Mammary epithelial cell (primary cell): ENCODE measurements at regions of chr11 and their contacts with region 1.

Region 1: GRCh38 chr11:7513234-7514098 is at the start of gene PPFIBP2:
- DNase-seq: peak; percentile 64
- H3K4me3 ChIP-seq: peak within 1 kb of the TSS; percentile 67 to 85 (median 80)
- H3K27ac ChIP-seq: peak within 1 kb of the TSS; percentile 47
- H3K4me1 ChIP-seq: peaks cover 18% of the 10 kb centered on the region
- H3K27me3 ChIP-seq: no peaks in the 10 kb centered on the region
- CTCF ChIP-seq: peak; percentile 74 to 87
- total RNA-seq, gene PPFIBP2: 8.3 to 8.4 TPM

Region 2: GRCh38 chr11:7480113-7480512 is 33.4 kb before region 1 on chr11:
- CTCF ChIA-PET with region 1: no interaction called
- dilution Hi-C with region 1: loop called (anchors 5 kb)
- in situ Hi-C with region 1: no loop called
- intact Hi-C with region 1: no loop called
- DNase-seq: no peak
- H3K4me3 ChIP-seq: no peak overlapping the region
- H3K27ac ChIP-seq: no peak overlapping the region
- H3K4me1 ChIP-seq: no peaks in the 10 kb centered on the region
- H3K27me3 ChIP-seq: no peaks in the 10 kb centered on the region
- CTCF ChIP-seq: no peak

Region 3: DNA sequence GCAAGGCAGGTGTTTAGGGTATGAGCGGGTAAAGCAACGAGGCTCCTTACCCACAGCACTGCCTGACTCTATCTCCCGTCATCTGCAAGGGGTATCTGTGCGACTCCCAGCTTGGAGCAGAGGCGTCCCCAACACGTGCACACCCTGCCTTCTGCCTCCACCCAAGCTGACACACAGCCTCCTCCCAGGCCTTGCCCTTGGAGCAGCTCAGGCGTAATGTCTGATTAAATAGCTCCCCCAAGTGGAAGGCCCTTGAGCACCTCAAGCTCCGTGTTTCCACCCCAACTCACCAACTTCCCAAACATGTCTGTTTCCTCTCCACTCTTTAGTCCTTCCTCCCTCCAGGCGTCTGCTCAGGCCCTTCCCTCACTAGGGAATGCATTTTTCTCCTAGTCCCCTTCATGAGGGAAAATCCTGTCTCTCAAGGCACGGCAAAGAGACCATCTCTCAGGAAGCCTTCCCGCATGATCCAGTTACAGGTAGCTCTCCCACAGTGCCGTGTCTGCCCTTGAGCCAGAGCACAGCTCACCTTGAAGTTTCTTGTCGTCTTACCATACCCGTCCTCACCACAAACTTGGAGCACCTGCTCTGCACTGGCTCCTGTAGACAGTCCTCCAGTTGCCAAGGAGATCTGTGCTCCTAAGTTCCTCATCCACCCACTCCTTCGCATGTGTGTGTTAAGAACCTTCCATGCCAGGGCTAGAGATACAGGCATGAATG is 144.0 kb after region 1 on chr11:
- CTCF ChIA-PET with region 1: interaction called, 3 read pairs
- dilution Hi-C with region 1: no loop called
- in situ Hi-C with region 1: no loop called
- intact Hi-C with region 1: loop called (anchors 1 kb)
- DNase-seq: peak; percentile 61
- H3K4me3 ChIP-seq: no peak overlapping the region
- H3K27ac ChIP-seq: no peak overlapping the region
- H3K4me1 ChIP-seq: no peaks in the 10 kb centered on the region
- H3K27me3 ChIP-seq: no peaks in the 10 kb centered on the region
- CTCF ChIP-seq: peak; percentile 60 to 78

Region 4: DNA sequence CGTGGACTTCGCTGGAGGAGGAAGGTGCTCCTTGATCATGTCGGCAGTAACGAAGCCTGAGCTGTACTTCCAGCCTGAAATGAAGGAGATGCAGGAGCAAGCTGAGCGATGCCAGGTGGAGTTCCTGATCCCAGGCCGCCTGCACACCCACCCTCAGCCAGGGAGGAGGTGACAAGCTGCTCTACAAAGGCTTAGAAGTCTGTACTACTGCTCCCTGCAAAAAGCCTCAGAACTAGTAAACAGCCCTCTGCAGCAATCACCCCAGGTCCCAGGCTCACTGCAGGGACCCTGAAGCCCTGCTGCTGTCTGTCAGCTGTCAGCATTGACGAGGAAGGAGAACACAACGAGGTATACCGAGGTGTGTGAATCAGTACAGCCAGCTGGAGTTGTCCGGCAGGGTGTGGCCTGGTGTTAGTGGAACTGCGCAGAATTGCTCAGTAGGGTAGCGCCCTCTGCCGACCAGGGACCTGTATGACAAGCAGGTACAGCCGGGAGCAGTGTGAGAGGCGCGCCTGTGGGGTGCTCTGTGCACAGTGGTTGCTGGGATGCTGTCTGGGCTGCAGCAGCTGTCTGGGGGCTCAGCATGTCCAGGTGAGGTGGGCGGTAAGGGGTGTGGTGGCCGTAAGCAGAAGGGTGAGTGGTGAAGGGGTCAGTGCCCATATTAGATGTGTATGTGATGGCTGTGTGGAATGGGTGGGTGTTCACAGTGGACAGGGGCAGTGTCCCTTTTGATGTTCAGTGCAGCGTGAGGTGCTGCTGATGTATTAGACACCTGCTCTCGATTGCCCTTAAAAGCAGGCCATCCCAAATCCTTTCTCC is 152.2 kb after region 1 on chr11:
- CTCF ChIA-PET with region 1: no interaction called
- dilution Hi-C with region 1: no loop called
- in situ Hi-C with region 1: no loop called
- intact Hi-C with region 1: loop called (anchors 2 kb)
- DNase-seq: peak; percentile 75
- H3K4me3 ChIP-seq: no peak overlapping the region
- H3K27ac ChIP-seq: no peak overlapping the region
- H3K4me1 ChIP-seq: peaks cover 23% of the 10 kb centered on the region
- H3K27me3 ChIP-seq: no peaks in the 10 kb centered on the region
- CTCF ChIP-seq: peak; percentile 89 to 96

Region 5: DNA sequence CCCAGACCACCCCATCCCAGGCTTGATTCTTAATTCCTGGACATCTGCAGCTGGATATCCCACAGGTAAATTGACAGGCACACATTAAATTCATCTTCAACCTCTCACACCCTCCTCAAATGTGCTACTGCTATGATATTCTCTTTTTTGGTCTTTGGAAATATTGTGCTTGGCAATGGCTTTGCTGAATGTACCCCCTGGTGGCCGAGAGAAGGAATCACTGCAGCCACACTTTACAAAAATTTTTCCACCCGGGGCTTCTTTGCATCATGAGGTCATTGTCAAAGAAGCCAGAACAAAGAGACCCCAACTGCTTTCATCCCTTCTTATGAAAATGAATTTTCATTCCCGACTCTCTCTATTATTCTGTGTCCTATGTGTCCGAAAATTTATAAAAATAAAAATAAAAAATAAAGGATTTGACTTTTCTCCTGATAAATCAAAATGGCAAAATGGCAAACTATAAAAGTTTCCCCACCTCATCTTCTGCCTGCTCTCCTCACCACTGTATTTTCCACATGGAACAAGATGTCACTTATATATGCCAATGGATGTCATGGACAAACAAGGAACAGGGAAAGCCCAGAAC is 174.9 kb after region 1 on chr11:
- CTCF ChIA-PET with region 1: no interaction called
- dilution Hi-C with region 1: no loop called
- in situ Hi-C with region 1: no loop called
- intact Hi-C with region 1: loop called (anchors 1 kb)
- DNase-seq: peak; percentile 20
- H3K4me3 ChIP-seq: no peak overlapping the region
- H3K27ac ChIP-seq: no peak overlapping the region
- H3K4me1 ChIP-seq: peaks cover 9% of the 10 kb centered on the region
- H3K27me3 ChIP-seq: no peaks in the 10 kb centered on the region
- CTCF ChIP-seq: peak; percentile 78 to 83

Region 6: DNA sequence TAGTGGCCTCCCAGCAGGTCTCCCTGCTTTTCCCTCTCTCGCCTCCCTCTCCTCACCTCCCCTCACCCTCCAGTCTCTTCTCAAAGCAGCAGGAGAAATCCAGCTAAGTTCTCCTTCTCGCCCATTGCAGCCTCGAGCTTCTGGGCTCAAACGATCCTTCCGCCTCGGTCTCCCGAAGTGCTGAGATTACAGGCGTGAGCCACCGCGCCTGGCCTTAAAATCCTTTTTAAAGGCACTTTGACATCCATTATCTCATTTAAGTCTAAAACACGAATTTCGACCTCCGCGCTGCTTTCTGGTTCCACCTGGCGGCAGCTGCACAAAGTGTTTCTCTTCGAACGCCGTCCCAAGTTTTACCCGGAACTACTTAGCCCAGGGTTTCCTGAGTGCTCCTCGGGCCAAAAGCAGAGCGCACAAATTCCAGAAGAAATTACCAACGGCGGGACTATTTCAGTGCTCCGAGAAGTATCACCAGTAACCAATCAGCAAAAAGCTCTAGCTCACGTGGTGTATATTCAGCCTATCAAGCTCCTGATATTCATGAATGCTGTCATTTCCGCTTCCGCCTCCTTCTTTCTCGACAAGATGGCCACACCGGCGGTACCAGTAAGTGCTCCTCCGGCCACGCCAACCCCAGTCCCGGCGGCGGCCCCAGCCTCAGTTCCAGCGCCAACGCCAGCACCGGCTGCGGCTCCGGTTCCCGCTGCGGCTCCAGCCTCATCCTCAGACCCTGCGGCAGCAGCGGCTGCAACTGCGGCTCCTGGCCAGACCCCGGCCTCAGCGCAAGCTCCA is 473.5 kb after region 1 on chr11 and contains the start of gene EIF3F:
- CTCF ChIA-PET with region 1: interaction called, 3 read pairs
- dilution Hi-C with region 1: no loop called
- in situ Hi-C with region 1: no loop called
- intact Hi-C with region 1: loop called (anchors 10 kb)
- DNase-seq: peak; percentile 98
- H3K4me3 ChIP-seq: peak within 1 kb of the TSS; percentile 68 to 98 (median 79)
- H3K27ac ChIP-seq: peak within 1 kb of the TSS; percentile 84
- H3K4me1 ChIP-seq: peaks cover 31% of the 10 kb centered on the region
- H3K27me3 ChIP-seq: no peaks in the 10 kb centered on the region
- CTCF ChIP-seq: peak; percentile 84 to 86
- total RNA-seq, gene EIF3F: 234 to 399 TPM